Activated T-helper 1 cell treated with anti-CD3 and anti-CD28 coated beads, Interleukin-12 subunit alpha, Interleukin-12 subunit beta, Interleukin-2, Interleukin-4 antibody, amounts not matched to agents 30 ng/mL and 10 ng/mL and 1 ng/mL, durations not matched to agents 14 hours and 24 hours and 36 hours (primary cell): ENCODE measurements at regions of chr6 and their contacts with region 1.

Region 1: DNA sequence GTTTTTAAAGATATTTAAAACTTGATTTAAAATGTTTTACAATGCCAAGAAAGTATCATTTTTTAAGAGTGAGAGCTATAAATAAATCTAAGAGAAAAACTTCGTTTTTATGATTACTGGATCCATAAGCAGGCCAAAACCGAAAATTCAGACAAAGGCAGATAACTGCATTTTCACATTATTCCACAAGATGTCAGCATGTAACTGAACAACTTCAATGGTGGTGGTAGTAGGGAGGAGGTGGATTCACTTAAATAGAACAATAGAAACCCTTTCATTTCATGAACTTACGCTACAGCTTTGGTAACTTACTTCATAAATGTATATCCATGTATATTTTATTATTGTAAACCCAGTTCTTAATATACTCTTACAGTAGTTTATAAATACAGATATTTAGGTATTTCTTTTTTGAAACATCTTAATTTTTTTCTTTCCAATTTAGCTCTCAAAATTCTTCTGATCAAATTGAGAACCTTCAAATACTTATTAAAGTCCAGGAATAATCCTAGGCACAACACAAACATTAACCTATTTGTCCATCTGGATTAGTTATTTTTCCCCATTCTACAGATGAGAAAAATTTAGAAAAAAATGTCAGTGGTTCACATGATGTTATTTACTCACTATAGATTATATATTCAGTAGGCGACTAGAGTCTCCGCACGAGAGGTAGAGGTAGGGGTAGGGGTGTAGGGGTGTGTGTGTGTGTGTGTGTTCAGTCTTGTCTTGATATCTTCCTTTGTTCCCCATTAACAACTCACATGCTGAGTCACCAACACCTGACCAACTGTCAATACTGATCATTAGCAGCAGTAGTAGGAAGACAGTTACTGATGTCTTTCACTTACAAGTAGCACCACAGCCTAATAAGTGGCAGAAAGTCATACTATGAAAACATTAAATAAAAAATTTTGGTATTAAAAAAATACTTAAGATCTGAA is 111.5 kb downstream of the ARHGAP18 start:
- DNase-seq: peak; percentile 19
- H3K4me3 Mint-ChIP-seq: no peak overlapping the region
- H3K27ac Mint-ChIP-seq: no peak overlapping the region
- H3K4me1 Mint-ChIP-seq: no peaks in the 10 kb centered on the region
- H3K27me3 Mint-ChIP-seq: no peaks in the 10 kb centered on the region

Region 2: DNA sequence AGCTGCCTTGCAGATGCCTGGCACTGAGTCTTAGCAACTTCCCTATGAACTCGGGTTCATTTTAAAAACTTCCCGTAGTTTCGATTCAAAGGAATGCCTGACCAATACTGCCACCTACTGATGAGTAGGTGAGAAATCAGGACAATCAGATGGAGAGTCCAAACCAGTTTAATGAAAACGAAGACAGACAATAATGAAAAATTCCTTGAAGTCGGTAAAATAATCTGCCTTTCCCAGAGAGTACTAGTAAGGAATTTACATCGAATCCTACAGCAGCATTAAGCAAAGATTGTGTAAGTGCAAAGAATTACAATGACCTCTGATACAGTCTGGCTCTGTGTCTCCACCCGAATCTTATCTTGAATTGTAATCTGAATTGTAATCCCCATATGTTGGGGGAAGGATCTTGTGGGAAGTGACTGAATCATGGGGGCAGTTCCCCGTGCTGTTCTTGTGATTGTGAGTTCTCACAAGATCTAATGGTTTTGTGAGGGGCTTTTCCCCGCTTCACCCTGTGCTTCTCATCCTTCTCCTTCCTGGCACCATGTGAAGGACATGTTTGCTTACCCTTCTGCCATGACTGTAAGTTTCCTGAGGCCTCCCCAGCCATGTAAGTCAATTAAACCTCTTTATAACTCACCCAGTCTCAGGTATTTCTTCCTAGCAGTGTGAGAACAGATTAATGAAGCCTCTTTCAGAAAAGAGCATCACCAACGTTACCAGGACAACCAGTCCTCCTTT is 23.0 kb before region 1 on chr6:
- intact Hi-C with region 1: no loop called
- DNase-seq: no peak
- H3K4me3 Mint-ChIP-seq: no peak overlapping the region
- H3K27ac Mint-ChIP-seq: no peak overlapping the region
- H3K4me1 Mint-ChIP-seq: peaks cover 9% of the 10 kb centered on the region
- H3K27me3 Mint-ChIP-seq: peaks cover 12% of the 10 kb centered on the region

Region 3: DNA sequence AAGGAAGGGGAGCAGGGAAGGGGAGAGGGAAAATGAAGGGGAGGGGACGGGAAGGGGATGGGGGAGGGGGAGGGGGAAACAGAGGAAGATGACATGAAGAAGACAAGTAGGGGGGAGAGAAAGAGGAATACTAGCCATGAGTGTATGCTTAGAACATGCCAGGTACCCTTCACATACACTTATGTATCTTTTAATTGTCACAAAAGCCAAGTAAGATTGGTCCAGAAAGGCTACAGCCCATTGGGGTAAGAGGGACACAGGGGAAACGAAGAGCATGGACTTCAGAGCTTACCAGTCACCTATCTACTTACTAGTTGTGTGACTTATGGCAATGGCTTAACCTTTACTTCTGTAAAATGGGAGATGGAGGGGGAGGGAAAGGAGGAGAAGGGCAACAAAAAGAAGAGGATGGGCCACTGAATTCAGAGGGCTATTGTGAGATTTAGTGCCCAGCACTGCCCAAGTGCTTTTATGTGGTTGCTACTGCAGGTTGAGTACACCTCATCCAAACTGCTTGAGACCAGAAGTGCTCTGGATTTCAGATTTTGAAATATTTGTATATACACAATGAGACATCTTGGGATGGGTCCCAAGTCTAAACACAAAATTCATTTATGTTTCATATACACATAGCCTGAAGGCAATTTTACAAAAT is 21.2 kb after region 1 on chr6:
- intact Hi-C with region 1: no loop called
- DNase-seq: no peak
- H3K4me3 Mint-ChIP-seq: no peak overlapping the region
- H3K27ac Mint-ChIP-seq: no peak overlapping the region
- H3K4me1 Mint-ChIP-seq: no peaks in the 10 kb centered on the region
- H3K27me3 Mint-ChIP-seq: no peaks in the 10 kb centered on the region

Region 4: DNA sequence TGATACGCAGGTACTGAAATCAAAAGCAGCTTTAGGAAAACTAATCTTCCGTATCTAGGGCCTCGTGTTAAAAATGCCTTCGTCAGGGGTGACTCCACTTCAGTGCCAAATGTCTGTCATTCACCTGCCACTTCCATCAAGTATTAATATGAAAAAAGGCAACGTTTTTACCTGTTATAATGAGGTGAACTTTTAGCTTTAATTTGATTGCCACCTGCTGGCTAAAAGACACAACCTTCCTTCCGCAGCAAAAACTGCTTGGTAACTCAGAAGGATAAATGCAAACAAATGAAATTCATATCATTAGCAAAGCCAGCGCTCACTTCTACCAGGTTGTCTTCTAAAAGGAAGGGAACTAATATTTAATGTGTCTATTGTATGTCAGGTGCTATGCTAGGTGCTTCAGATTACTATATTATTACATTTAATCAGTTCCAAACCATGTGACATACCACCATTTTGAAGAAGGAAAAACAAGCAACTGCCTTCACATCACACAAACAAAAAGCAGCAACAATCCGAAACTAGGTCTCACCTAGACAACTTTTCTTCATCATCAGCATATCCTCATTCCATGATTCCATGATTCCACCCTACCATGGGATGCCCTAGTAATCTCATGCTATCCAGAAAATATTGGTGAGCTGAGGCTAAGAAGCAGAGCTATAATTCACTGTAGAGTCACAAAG is 132.1 kb after region 1 on chr6:
- intact Hi-C with region 1: loop called (anchors 1 kb)
- DNase-seq: no peak
- H3K4me3 Mint-ChIP-seq: no peak overlapping the region
- H3K27ac Mint-ChIP-seq: peak overlapping the region; percentile 29
- H3K4me1 Mint-ChIP-seq: peaks cover 15% of the 10 kb centered on the region
- H3K27me3 Mint-ChIP-seq: peaks cover 4% of the 10 kb centered on the region

Region 5: GRCh38 chr6:129774697-129775447 is 176.4 kb after region 1 on chr6:
- intact Hi-C with region 1: loop called (anchors 1 kb)
- DNase-seq: peak; percentile 21
- H3K4me3 Mint-ChIP-seq: no peak overlapping the region
- H3K27ac Mint-ChIP-seq: no peak overlapping the region
- H3K4me1 Mint-ChIP-seq: no peaks in the 10 kb centered on the region
- H3K27me3 Mint-ChIP-seq: peaks cover 26% of the 10 kb centered on the region

Region 6: GRCh38 chr6:129936329-129937165 is 338.0 kb after region 1 on chr6:
- intact Hi-C with region 1: loop called (anchors 1 kb)
- DNase-seq: peak; percentile 11
- H3K4me3 Mint-ChIP-seq: no peak overlapping the region
- H3K27ac Mint-ChIP-seq: no peak overlapping the region
- H3K4me1 Mint-ChIP-seq: no peaks in the 10 kb centered on the region
- H3K27me3 Mint-ChIP-seq: peaks cover 19% of the 10 kb centered on the region